ENCODE measurements at regions of chr9 and their contacts with region 1.

Region 1: GRCh38 chr9:503881-504852 is 289.5 kb downstream of the DOCK8 start:
- DNase-seq: peak; percentile 24
- ATAC-seq: peak; percentile 94
- H3K4me3 ChIP-seq: peak within 1 kb of the TSS; percentile 47
- H3K27ac ChIP-seq: no peak within 1 kb of the TSS
- H3K4me1 ChIP-seq: no peaks in the 10 kb centered on the region; the same call in 1 of the 2 replicates
- H3K27me3 ChIP-seq: peaks cover 27% of the 10 kb centered on the region
- CTCF ChIP-seq: peak; percentile 33
- POLR2A ChIP-seq: no peak
- RAD21 ChIP-seq: 0 out of 2 replicates have a peak, but pooled peaks have one; percentile 9

Region 2: GRCh38 chr9:214648-215493 is 289.3 kb before region 1 on chr9 and contains the start of gene DOCK8:
- CTCF ChIA-PET with region 1: no interaction called
- POLR2A ChIA-PET with region 1: no interaction called
- dilution Hi-C with region 1: no loop called
- in situ Hi-C with region 1: no loop called
- intact Hi-C with region 1: no loop called
- DNase-seq: no peak
- ATAC-seq: peak; percentile 80
- H3K4me3 ChIP-seq: peak within 1 kb of the TSS; percentile 28
- H3K27ac ChIP-seq: no peak within 1 kb of the TSS
- H3K4me1 ChIP-seq: no peaks in the 10 kb centered on the region
- H3K27me3 ChIP-seq: peaks cover 28% of the 10 kb centered on the region
- CTCF ChIP-seq: no peak
- POLR2A ChIP-seq: no peak
- RAD21 ChIP-seq: no peak
- total RNA-seq, gene DOCK8: not detected in 2 replicates

Region 3: GRCh38 chr9:447230-448025 is 56.7 kb before region 1 on chr9:
- CTCF ChIA-PET with region 1: no interaction called
- POLR2A ChIA-PET with region 1: no interaction called
- dilution Hi-C with region 1: no loop called
- in situ Hi-C with region 1: no loop called
- intact Hi-C with region 1: loop called (anchors 10 kb)
- DNase-seq: peak; percentile 8
- ATAC-seq: peak; percentile 40; the same call in 1 of the 2 replicates
- H3K4me3 ChIP-seq: no peak overlapping the region
- H3K27ac ChIP-seq: no peak overlapping the region
- H3K4me1 ChIP-seq: no peaks in the 10 kb centered on the region; the same call in 1 of the 2 replicates
- H3K27me3 ChIP-seq: peaks cover 4% of the 10 kb centered on the region; the same call in 1 of the 2 replicates
- CTCF ChIP-seq: no peak
- POLR2A ChIP-seq: no peak
- RAD21 ChIP-seq: no peak

Region 4: GRCh38 chr9:517993-518392 is 13.8 kb after region 1 on chr9:
- CTCF ChIA-PET with region 1: no interaction called
- POLR2A ChIA-PET with region 1: no interaction called
- dilution Hi-C with region 1: no loop called
- in situ Hi-C with region 1: no loop called
- intact Hi-C with region 1: no loop called
- DNase-seq: no peak
- ATAC-seq: no peak
- H3K4me3 ChIP-seq: no peak overlapping the region
- H3K27ac ChIP-seq: no peak overlapping the region
- H3K4me1 ChIP-seq: no peaks in the 10 kb centered on the region
- H3K27me3 ChIP-seq: no peaks in the 10 kb centered on the region; the same call in 1 of the 2 replicates
- CTCF ChIP-seq: no peak
- POLR2A ChIP-seq: no peak
- RAD21 ChIP-seq: no peak